ENCODE measurements at regions of chr7 and their contacts with region 1.

Region 1: GRCh38 chr7:51350200-51350921 is 33.8 kb upstream of the COBL start:
- DNase-seq: peak; percentile 92
- ATAC-seq: peak; percentile 100
- H3K4me3 ChIP-seq: peak overlapping the region; percentile 42
- H3K27ac ChIP-seq: peak overlapping the region; percentile 57
- H3K4me1 ChIP-seq: peaks cover 12% of the 10 kb centered on the region
- H3K27me3 ChIP-seq: no peaks in the 10 kb centered on the region
- CTCF ChIP-seq: no peak

Region 2: DNA sequence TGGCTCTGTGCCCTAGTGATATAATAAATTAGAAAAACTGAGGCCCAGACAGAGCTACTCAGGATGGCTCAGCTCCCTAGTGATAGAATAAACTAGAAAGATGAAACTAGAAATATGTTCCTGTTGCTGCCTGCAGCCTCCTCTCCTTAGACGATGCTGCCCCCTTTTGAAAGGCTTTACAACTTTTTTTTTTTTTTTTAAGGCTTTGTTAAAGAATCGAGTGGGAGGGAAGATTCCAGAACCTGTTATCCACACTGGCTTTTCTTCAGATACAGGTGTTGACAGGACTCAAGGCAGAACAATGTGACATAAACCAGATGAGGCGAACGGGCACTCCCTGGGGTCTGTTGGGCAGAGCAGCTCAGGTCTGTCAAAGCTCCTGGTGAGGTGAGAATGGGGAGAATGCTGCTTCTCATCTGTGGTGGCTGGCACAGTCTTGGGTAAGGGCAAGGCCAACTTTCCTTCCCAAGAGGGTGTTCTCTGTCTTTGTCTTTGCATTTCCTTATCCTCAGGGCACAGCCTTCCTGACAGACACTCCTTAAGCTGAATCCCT is 208.8 kb before region 1 on chr7:
- CTCF ChIA-PET with region 1: no interaction called
- POLR2A ChIA-PET with region 1: no interaction called
- intact Hi-C with region 1: no loop called
- DNase-seq: peak; percentile 60
- ATAC-seq: peak; percentile 58
- H3K4me3 ChIP-seq: no peak overlapping the region
- H3K27ac ChIP-seq: no peak overlapping the region
- H3K4me1 ChIP-seq: peaks cover 18% of the 10 kb centered on the region
- H3K27me3 ChIP-seq: no peaks in the 10 kb centered on the region
- CTCF ChIP-seq: peak; percentile 84

Region 3: DNA sequence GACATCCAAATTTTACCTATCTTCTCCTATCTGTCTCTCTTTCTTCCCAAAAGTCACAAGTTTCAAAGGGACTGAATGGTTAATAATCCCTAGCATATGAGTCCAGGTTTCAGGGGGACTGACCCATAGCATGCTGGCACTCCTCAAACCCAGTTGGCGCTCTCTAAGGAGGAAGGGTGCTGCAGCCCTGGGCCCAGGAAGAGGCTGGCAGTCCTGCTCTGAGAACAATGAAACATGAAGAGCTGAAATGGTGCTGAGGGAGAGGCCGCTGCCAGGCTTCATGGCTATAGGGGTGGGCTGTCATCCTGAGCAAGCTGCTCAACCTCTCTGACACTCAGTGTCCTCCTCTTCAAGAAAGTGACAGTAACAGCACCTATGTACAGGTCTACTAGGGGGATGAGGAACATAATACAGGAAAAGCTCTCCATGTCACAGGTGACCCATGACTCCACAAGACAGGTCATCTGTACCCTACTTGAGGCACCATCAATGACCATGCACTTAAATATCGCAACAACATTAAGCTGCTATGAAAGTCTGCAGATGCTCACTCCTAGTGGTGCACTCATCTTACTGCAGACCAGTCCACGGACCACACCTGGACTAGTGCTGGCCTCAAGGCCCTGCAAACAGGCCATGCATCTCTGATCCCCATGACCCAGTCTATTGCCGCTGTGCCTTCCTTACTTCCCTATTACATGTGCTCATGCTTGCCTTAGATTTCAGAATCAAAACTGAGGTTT is 50.8 kb before region 1 on chr7:
- CTCF ChIA-PET with region 1: no interaction called
- POLR2A ChIA-PET with region 1: no interaction called
- intact Hi-C with region 1: loop called (anchors 5 kb)
- DNase-seq: no peak
- ATAC-seq: no peak
- H3K4me3 ChIP-seq: no peak overlapping the region
- H3K27ac ChIP-seq: no peak overlapping the region
- H3K4me1 ChIP-seq: peaks cover 37% of the 10 kb centered on the region
- H3K27me3 ChIP-seq: no peaks in the 10 kb centered on the region
- CTCF ChIP-seq: 0 out of 2 replicates have a peak, but pooled peaks have one; percentile 17

Region 4: GRCh38 chr7:51878865-51879264 is 528.5 kb after region 1 on chr7:
- CTCF ChIA-PET with region 1: no interaction called
- POLR2A ChIA-PET with region 1: no interaction called
- intact Hi-C with region 1: no loop called
- DNase-seq: no peak
- ATAC-seq: no peak
- H3K4me3 ChIP-seq: no peak overlapping the region
- H3K27ac ChIP-seq: no peak overlapping the region
- H3K4me1 ChIP-seq: no peaks in the 10 kb centered on the region
- H3K27me3 ChIP-seq: no peaks in the 10 kb centered on the region
- CTCF ChIP-seq: no peak